SK-N-SH (cell line): ENCODE measurements at regions of chr3 and their contacts with region 1.

Region 1: GRCh38 chr3:171772427-171773056 is 37.7 kb downstream of the PLD1 start:
- DNase-seq: peak; percentile 64
- H3K4me3 ChIP-seq: peak overlapping the region in 1 of 2 experiments; percentile 22; a peak in 1 of 4 replicates
- H3K27ac ChIP-seq: no peak overlapping the region
- H3K4me1 ChIP-seq: peaks cover 0 to 11% of the 10 kb centered on the region in 2 experiments; a peak in 2 of 4 replicates
- H3K27me3 ChIP-seq: no peaks in the 10 kb centered on the region
- CTCF ChIP-seq: peak; percentile 86
- EP300 ChIP-seq: no peak
- RAD21 ChIP-seq: peak; percentile 90

Region 2: DNA sequence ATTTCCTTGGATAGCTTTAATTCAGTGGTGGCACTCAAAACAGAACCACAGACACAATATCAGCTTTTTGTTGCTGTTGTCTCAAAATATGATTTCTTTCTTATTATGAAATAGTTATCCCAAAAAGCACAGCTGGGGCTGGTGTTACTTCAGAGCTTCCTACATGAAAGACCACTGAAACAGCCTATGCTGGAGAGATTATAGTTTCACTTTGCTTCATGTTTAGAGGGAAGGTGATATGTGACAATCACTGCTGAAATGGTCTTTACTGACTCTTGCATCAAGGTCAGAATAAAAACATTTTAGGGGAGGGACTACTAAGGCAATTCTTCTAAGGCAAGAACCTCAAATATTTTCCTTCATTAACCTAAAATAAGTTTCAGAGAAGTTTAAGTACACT is 503.0 kb before region 1 on chr3:
- CTCF ChIA-PET with region 1: no interaction called
- POLR2A ChIA-PET with region 1: no interaction called
- DNase-seq: no peak
- H3K4me3 ChIP-seq: no peak overlapping the region
- H3K27ac ChIP-seq: no peak overlapping the region
- H3K4me1 ChIP-seq: peaks cover 0 to 17% of the 10 kb centered on the region in 2 experiments; a peak in 3 of 4 replicates
- H3K27me3 ChIP-seq: no peaks in the 10 kb centered on the region
- CTCF ChIP-seq: no peak
- EP300 ChIP-seq: no peak
- RAD21 ChIP-seq: no peak

Region 3: DNA sequence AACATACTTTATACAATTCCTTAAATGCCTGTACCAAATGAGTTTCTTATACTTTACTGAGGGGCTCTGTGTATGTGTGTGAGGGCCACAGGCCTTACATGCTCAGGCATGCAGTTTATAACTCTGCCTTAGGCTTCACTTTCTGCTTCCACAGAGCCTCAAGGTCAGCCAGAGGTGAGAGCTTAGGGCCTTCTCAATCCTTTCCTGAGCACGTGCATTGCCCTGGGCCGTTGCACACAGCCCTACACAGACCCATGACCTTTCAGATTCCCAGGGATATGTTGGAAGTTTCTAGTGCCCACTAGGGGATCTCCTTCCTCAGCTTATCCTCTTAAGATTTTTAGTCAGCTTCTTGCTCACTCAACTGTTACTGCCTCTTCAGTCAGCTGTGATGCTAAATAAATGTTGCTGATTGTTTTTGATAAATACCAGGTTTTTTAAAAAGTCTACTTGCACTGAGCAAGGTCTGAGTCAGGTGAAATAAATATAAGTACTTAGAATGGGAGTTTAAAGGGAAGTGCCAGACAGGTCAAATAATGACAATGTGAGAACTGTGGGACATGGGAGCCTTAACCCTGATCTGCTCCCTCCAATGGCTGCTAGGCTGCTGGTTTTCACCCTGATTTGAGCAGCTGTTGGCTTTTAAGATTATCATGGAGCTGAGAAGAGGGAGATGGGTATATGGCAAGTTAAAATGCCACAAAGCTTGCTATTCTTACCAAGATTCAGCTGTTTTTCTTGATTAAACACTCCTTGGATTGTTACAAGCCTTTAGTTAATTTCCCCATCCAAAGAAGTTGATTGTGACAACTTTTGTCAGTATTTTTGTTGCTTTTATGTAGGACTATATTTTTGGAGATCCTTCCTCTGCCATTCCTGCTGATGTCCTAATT is 131.8 kb before region 1 on chr3:
- CTCF ChIA-PET with region 1: interaction called, 64 read pairs
- POLR2A ChIA-PET with region 1: no interaction called
- DNase-seq: no peak
- H3K4me3 ChIP-seq: no peak overlapping the region
- H3K27ac ChIP-seq: peak overlapping the region; percentile 28 to 62
- H3K4me1 ChIP-seq: peaks cover 6 to 7% of the 10 kb centered on the region in 2 experiments; a peak in 3 of 4 replicates
- H3K27me3 ChIP-seq: no peaks in the 10 kb centered on the region
- CTCF ChIP-seq: peak; percentile 31; the same call in 1 of the 2 replicates
- EP300 ChIP-seq: no peak
- RAD21 ChIP-seq: no peak

Region 4: GRCh38 chr3:171703756-171704401 is 68.7 kb before region 1 on chr3:
- CTCF ChIA-PET with region 1: interaction called, 32 read pairs
- POLR2A ChIA-PET with region 1: no interaction called
- DNase-seq: peak; percentile 51
- H3K4me3 ChIP-seq: no peak overlapping the region
- H3K27ac ChIP-seq: no peak overlapping the region
- H3K4me1 ChIP-seq: no peaks in the 10 kb centered on the region; a peak in 1 of 4 replicates
- H3K27me3 ChIP-seq: no peaks in the 10 kb centered on the region
- CTCF ChIP-seq: peak; percentile 51
- EP300 ChIP-seq: no peak
- RAD21 ChIP-seq: peak; percentile 68

Region 5: GRCh38 chr3:171753665-171754408 is 18.7 kb before region 1 on chr3:
- CTCF ChIA-PET with region 1: interaction called, 36 read pairs
- POLR2A ChIA-PET with region 1: no interaction called
- DNase-seq: no peak
- H3K4me3 ChIP-seq: no peak overlapping the region
- H3K27ac ChIP-seq: peak overlapping the region in 1 of 2 experiments; percentile 45; a peak in 3 of 4 replicates
- H3K4me1 ChIP-seq: peaks cover 0 to 15% of the 10 kb centered on the region in 2 experiments; a peak in 2 of 4 replicates
- H3K27me3 ChIP-seq: no peaks in the 10 kb centered on the region
- CTCF ChIP-seq: no peak
- EP300 ChIP-seq: no peak
- RAD21 ChIP-seq: no peak

Region 6: GRCh38 chr3:171809821-171810628 is 37.5 kb after region 1 on chr3 and contains the start of gene PLD1:
- CTCF ChIA-PET with region 1: interaction called, 10 read pairs
- POLR2A ChIA-PET with region 1: no interaction called
- DNase-seq: peak; percentile 88
- H3K4me3 ChIP-seq: peak within 1 kb of the TSS; percentile 75 to 79
- H3K27ac ChIP-seq: peak within 1 kb of the TSS; percentile 51 to 95
- H3K4me1 ChIP-seq: peaks cover 12 to 22% of the 10 kb centered on the region in 2 experiments; a peak in 3 of 4 replicates
- H3K27me3 ChIP-seq: no peaks in the 10 kb centered on the region
- CTCF ChIP-seq: no peak
- EP300 ChIP-seq: peak in 1 of 2 experiments; percentile 50; a peak in 1 of 4 replicates
- RAD21 ChIP-seq: peak; percentile 9; the same call in 1 of the 2 replicates
- polyA plus RNA-seq, gene PLD1: 6.2 and 7.9 TPM in 2 replicates

Region 7: GRCh38 chr3:172341482-172342059 is 569.0 kb after region 1 on chr3:
- CTCF ChIA-PET with region 1: interaction called, 19 read pairs
- POLR2A ChIA-PET with region 1: no interaction called
- DNase-seq: peak; percentile 54
- H3K4me3 ChIP-seq: no peak overlapping the region
- H3K27ac ChIP-seq: no peak overlapping the region
- H3K4me1 ChIP-seq: no peaks in the 10 kb centered on the region
- H3K27me3 ChIP-seq: no peaks in the 10 kb centered on the region
- CTCF ChIP-seq: peak; percentile 70
- EP300 ChIP-seq: no peak
- RAD21 ChIP-seq: peak; percentile 85